PC-9 (cell line): ENCODE measurements at regions of chr1 and their contacts with region 1.

Region 1: DNA sequence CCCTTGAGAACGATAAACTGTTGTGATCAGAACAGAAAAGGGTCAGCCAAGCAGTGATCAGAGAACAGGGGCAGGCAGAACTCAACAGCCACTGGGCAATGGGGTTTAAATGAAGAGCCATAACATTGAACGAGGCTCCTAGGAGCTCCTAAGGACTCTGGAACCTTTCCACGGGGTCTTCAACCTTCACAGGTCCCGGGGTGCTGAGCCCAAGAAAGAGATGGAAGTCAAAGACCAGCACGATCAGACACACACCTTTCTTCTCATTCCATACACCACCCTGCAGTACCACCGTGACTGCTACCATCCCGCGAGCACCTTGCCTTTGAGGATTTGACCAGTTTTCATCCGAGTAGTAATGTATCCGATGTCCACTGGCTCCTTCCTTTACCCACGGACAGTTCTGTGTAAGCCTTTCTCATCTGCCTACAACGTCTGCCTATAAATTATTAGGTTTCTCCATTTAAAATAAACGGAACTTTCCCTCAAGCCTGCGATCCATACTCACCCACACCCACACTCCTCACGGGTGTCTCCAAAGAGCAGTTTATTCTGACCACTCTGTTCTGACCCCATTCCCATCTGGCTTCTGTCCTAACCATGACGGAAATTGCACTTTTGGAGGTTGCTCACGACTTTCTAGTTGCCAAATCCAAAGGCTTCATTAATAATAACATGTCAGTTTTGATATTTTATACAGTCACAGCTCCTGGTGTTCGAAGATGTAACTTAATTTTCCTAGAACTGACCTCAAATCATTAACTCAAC is 16.8 kb upstream of the HHAT start:
- DNase-seq: no peak
- H3K4me3 ChIP-seq: peak overlapping the region; percentile 53; the same call in 1 of the 2 replicates
- H3K27ac ChIP-seq: no peak overlapping the region
- H3K4me1 ChIP-seq: 0 out of 2 replicates have a peak, but pooled peaks cover 10% of the 10 kb centered on the region
- H3K27me3 ChIP-seq: no peaks in the 10 kb centered on the region
- CTCF ChIP-seq: no peak

Region 2: GRCh38 chr1:210024996-210025395 is 286.9 kb before region 1 on chr1:
- CTCF ChIA-PET with region 1: interaction called, 5 read pairs
- POLR2A ChIA-PET with region 1: no interaction called
- intact Hi-C with region 1: loop called (anchors 10 kb)
- DNase-seq: no peak
- H3K4me3 ChIP-seq: no peak overlapping the region
- H3K27ac ChIP-seq: no peak overlapping the region
- H3K4me1 ChIP-seq: no peaks in the 10 kb centered on the region
- H3K27me3 ChIP-seq: no peaks in the 10 kb centered on the region
- CTCF ChIP-seq: no peak

Region 3: GRCh38 chr1:210207597-210208450 is 104.1 kb before region 1 on chr1:
- CTCF ChIA-PET with region 1: no interaction called
- POLR2A ChIA-PET with region 1: no interaction called
- intact Hi-C with region 1: no loop called
- DNase-seq: no peak
- H3K4me3 ChIP-seq: no peak overlapping the region
- H3K27ac ChIP-seq: no peak overlapping the region
- H3K4me1 ChIP-seq: no peaks in the 10 kb centered on the region
- H3K27me3 ChIP-seq: no peaks in the 10 kb centered on the region
- CTCF ChIP-seq: no peak

Region 4: GRCh38 chr1:210233216-210234020 is 78.5 kb before region 1 on chr1:
- CTCF ChIA-PET with region 1: interaction called, 5 read pairs
- POLR2A ChIA-PET with region 1: interaction called, 6 read pairs
- intact Hi-C with region 1: loop called (anchors 2 kb)
- DNase-seq: peak; percentile 75 to 77
- H3K4me3 ChIP-seq: peak overlapping the region; percentile 96
- H3K27ac ChIP-seq: peak overlapping the region; percentile 41
- H3K4me1 ChIP-seq: peaks cover 31% of the 10 kb centered on the region
- H3K27me3 ChIP-seq: no peaks in the 10 kb centered on the region
- CTCF ChIP-seq: no peak

Region 5: DNA sequence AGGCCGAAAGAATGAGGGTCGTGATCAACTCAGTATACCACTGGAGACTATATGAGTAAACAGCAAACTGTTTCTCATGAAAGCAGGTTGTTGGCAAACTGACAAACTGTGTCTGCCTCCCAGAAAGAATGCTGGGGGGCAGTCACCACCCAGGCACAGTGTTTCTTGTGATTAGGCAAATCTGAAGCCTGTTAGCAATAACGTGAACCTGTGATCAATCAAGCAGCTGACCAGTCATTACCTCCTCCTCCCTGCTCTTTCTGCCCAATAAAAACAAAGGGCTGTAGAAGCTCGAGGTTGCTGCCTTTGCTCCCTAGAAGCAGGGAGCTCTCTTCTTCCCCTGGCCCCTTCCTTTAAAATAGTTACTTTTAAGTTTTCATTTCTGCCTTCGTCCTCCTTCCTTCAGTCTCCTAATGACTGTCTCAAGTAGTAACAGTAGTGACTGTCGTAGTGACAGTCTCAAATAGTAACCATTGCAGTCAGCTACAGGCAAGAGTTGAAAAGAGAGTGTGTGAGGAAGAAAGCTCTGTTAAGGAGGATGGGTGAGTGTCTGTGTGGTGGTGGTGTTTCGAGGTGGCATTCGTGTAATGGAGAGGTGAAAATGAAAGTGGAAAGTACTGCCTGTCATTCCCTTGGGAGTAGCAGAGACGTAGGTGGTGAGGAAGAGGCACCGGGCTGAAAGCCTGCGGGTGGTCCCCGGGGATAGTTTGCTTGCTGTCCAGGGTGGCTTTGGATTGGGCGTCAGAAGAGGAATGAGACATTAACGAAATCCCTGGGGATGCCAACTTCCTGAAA is 31.3 kb after region 1 on chr1:
- CTCF ChIA-PET with region 1: interaction called, 15 read pairs
- POLR2A ChIA-PET with region 1: no interaction called
- intact Hi-C with region 1: no loop called
- DNase-seq: no peak
- H3K4me3 ChIP-seq: no peak overlapping the region
- H3K27ac ChIP-seq: no peak overlapping the region
- H3K4me1 ChIP-seq: no peaks in the 10 kb centered on the region
- H3K27me3 ChIP-seq: no peaks in the 10 kb centered on the region
- CTCF ChIP-seq: no peak

Region 6: GRCh38 chr1:210385228-210385627 is 73.3 kb after region 1 on chr1:
- CTCF ChIA-PET with region 1: no interaction called
- POLR2A ChIA-PET with region 1: no interaction called
- intact Hi-C with region 1: no loop called
- DNase-seq: no peak
- H3K4me3 ChIP-seq: no peak overlapping the region
- H3K27ac ChIP-seq: no peak overlapping the region
- H3K4me1 ChIP-seq: no peaks in the 10 kb centered on the region
- H3K27me3 ChIP-seq: no peaks in the 10 kb centered on the region
- CTCF ChIP-seq: no peak

Region 7: GRCh38 chr1:210400043-210400840 is 88.3 kb after region 1 on chr1:
- CTCF ChIA-PET with region 1: no interaction called
- POLR2A ChIA-PET with region 1: no interaction called
- intact Hi-C with region 1: loop called (anchors 1 kb)
- DNase-seq: peak; percentile 52 to 65
- H3K4me3 ChIP-seq: no peak overlapping the region
- H3K27ac ChIP-seq: no peak overlapping the region
- H3K4me1 ChIP-seq: no peaks in the 10 kb centered on the region
- H3K27me3 ChIP-seq: no peaks in the 10 kb centered on the region
- CTCF ChIP-seq: peak; percentile 83

Region 8: DNA sequence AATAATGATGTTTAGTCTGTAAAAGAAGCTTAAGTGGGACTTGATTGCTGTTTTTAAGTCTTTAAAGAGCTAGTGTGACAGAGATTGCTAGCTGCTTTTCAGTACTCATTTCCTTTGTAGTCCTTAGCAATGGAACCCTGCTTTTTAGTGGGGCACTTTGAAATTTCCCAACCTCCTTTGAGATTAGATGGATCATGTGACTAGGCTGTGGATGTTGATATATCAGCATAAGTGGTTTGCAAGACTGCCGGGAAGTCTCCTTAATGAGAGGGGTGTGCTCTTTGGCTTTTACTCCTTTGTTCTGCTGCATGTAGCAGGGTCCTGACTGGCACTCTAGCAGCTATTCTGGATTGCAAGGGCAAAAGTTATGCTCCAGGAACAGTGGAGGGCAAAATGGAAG is 936.0 kb after region 1 on chr1:
- CTCF ChIA-PET with region 1: interaction called, 26 read pairs
- POLR2A ChIA-PET with region 1: no interaction called
- intact Hi-C with region 1: no loop called
- DNase-seq: no peak
- H3K4me3 ChIP-seq: no peak overlapping the region
- H3K27ac ChIP-seq: no peak overlapping the region
- H3K4me1 ChIP-seq: no peaks in the 10 kb centered on the region
- H3K27me3 ChIP-seq: no peaks in the 10 kb centered on the region
- CTCF ChIP-seq: no peak